Breast epithelium (tissue), 4 donors: ENCODE measurements at regions of chr12 and their contacts with region 1.

Region 1: GRCh38 chr12:120413901-120414695 is 23.8 kb upstream of the COX6A1 start:
- DNase-seq: no peak
- H3K4me3 ChIP-seq: no peak overlapping the region
- H3K27ac ChIP-seq: no peak overlapping the region
- H3K4me1 ChIP-seq: no peaks in the 10 kb centered on the region
- H3K27me3 ChIP-seq: no peaks in the 10 kb centered on the region
- CTCF ChIP-seq: no peak
- POLR2A ChIP-seq: no peak

Region 2: GRCh38 chr12:120332041-120332440 is 82.1 kb before region 1 on chr12:
- intact Hi-C with region 1: no loop called
- DNase-seq: no peak
- H3K4me3 ChIP-seq: no peak overlapping the region
- H3K27ac ChIP-seq: no peak overlapping the region
- H3K4me1 ChIP-seq: no peaks in the 10 kb centered on the region
- H3K27me3 ChIP-seq: no peaks in the 10 kb centered on the region
- CTCF ChIP-seq: no peak
- POLR2A ChIP-seq: no peak

Region 3: GRCh38 chr12:120346681-120347080 is 67.4 kb before region 1 on chr12:
- intact Hi-C with region 1: loop called (anchors 2 kb)
- DNase-seq: no peak
- H3K4me3 ChIP-seq: no peak overlapping the region
- H3K27ac ChIP-seq: no peak overlapping the region
- H3K4me1 ChIP-seq: no peaks in the 10 kb centered on the region
- H3K27me3 ChIP-seq: no peaks in the 10 kb centered on the region
- CTCF ChIP-seq: no peak
- POLR2A ChIP-seq: no peak

Region 4: DNA sequence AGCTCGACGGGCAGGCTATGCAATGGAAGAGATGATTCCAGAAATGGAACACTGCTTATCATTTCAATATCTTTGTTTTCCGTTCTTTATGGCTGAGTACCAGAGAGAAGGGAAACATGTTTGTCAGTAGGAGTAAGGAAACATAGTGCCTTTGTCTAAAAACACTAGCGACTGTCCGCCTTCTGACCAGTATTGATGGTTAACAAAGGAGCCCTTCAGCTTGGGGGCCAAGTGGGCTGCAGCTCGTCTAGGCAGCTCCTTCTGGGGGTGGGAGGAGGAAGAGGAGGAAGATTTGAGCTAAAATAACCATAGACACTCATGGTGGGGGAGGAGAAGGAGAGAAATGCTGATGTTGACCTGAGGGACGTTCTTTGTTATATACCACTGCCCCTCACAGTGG is 99.9 kb after region 1 on chr12:
- intact Hi-C with region 1: no loop called
- DNase-seq: no peak
- H3K4me3 ChIP-seq: no peak overlapping the region
- H3K27ac ChIP-seq: no peak overlapping the region
- H3K4me1 ChIP-seq: no peaks in the 10 kb centered on the region
- H3K27me3 ChIP-seq: no peaks in the 10 kb centered on the region
- CTCF ChIP-seq: no peak
- POLR2A ChIP-seq: no peak